ENCODE measurements at regions of chr9 and their contacts with region 1.

Region 1: GRCh38 chr9:137524984-137525323 is 25.2 kb downstream of the PNPLA7 start:
- DNase-seq: no peak
- H3K4me3 Mint-ChIP-seq: no peak overlapping the region
- H3K27ac Mint-ChIP-seq: no peak overlapping the region
- H3K4me1 Mint-ChIP-seq: peaks cover 3% of the 10 kb centered on the region
- H3K27me3 Mint-ChIP-seq: no peaks in the 10 kb centered on the region

Region 2: DNA sequence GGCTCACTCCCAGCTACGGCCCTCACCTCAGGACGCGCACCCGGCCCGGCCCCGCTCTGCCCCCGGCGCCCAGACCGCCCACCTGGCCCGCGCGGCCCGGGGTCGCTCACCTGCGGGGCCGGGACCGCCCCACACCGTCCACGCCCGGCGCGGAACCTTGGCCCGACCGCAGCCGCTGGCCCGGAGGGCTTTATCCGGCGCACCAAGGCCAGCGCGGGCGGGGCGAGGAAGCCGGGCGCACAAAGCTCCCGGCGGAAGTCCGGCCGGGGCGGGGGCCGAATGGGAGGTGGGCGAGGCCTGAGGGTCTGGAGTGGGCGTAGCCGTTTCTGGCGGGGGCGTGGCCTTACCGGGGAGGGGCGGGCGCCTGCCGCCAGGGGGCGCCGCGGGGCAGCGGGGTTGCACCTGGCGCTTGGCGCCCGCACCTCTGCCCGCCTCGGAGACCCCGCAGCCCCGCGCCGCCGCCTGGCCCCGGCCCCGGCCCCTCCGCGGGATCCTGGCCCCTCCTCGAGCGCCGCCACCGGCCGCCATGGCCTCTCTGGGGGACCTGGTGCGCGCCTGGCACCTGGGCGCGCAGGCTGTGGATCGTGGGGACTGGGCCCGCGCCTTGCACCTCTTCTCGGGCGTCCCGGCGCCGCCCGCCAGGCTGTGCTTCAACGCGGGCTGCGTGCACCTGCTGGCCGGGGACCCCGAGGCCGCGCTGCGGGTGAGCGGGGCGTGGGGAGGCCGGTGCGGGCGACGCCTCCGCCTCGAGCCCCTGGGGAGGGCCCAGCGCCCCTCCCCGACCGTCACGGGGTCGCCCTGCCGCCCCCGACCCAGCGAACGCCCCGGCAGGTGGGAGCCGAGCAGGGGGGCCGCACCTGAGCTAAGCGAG is 101.7 kb before region 1 on chr9 and contains the starts of genes EXD3 and NOXA1:
- CTCF ChIA-PET with region 1: interaction called, 3 read pairs
- intact Hi-C with region 1: loop called (anchors 5 kb)
- DNase-seq: peak; percentile 96
- H3K4me3 Mint-ChIP-seq: peak within 1 kb of the TSS; percentile 77
- H3K27ac Mint-ChIP-seq: peak within 1 kb of the TSS; percentile 13
- H3K4me1 Mint-ChIP-seq: peaks cover 16% of the 10 kb centered on the region
- H3K27me3 Mint-ChIP-seq: no peaks in the 10 kb centered on the region
- total RNA-seq, gene EXD3: 11.2 to 12.7 TPM
- total RNA-seq, gene NOXA1: 1.0 to 1.2 TPM

Region 3: GRCh38 chr9:137470785-137471184 is 54.2 kb before region 1 on chr9:
- CTCF ChIA-PET with region 1: no interaction called
- intact Hi-C with region 1: no loop called
- DNase-seq: no peak
- H3K4me3 Mint-ChIP-seq: no peak overlapping the region
- H3K27ac Mint-ChIP-seq: no peak overlapping the region
- H3K4me1 Mint-ChIP-seq: peaks cover 5% of the 10 kb centered on the region
- H3K27me3 Mint-ChIP-seq: no peaks in the 10 kb centered on the region